Right ventricle myocardium inferior (tissue), 1 donor: ENCODE measurements at regions of chr13 and their contacts with region 1.

Region 1: DNA sequence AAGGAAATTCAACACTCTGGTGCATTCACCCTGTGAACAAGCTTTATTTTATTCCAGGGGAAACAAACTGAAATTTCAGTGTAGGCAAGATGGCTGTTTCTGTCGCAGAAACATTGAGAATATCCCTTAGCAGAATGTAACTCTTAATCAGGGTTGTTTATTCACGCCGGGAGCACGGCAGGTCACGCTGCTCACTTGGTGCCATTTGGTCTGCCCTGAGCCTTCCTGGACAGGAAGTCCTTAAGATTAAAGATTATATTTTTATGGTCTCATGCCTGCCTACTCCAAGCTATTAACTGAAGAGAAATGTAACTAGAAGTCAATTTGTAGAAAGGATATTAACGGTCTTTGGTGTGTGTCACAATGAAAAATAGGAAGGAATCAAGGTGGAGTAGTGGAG is 185.3 kb upstream of the ARGLU1 start:
- DNase-seq: no peak
- ATAC-seq: no peak

Region 2: DNA sequence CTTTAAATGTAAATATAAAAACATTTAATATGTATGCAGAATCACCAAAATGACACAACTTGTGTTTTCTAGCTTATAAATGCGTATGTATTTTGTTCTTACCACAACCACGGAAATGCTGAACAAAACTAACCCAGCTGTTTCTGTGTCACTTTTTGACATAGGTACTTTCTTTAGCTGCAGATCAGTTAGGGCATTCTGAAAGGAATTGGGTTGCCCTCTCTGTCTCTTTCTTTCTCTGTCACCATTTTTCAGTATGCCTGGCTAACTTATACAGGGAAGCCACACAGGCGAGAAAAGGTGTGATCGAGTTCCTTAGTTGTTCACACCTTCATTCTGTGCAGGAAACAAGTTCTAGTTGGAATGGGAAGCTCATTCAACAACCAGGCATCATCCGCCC is 112.7 kb before region 1 on chr13:
- intact Hi-C with region 1: no loop called
- DNase-seq: no peak
- ATAC-seq: no peak

Region 3: GRCh38 chr13:106709522-106709921 is 43.7 kb before region 1 on chr13:
- intact Hi-C with region 1: loop called (anchors 2 kb)
- DNase-seq: no peak
- ATAC-seq: peak; percentile 85

Region 4: GRCh38 chr13:106846571-106847448 is 93.6 kb after region 1 on chr13:
- intact Hi-C with region 1: no loop called
- DNase-seq: no peak
- ATAC-seq: no peak